Calu3 (cell line): ENCODE measurements at regions of chr2 and their contacts with region 1.

Region 1: DNA sequence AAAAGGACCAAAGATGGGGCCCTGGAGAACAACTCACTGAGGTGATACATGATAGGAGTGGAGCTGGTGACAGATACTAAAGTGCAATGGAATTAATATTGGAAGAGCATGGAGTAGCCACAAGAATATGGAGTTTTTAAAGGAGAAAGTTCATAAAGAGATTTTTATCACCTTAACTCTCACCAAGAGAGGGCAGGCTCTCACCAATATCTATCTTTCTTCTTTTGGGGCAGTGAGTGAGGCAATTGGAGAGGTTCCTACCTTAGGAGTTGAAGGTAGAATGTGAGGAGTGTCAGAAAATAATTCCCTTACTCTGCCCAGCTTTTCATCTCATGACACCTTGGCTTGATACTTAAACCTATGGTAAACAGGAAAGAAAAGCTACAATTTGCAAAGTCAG is 233.7 kb upstream of the CWC22 start:
- DNase-seq: peak; percentile 21
- H3K4me3 Mint-ChIP-seq: no peak overlapping the region
- H3K27ac Mint-ChIP-seq: no peak overlapping the region
- H3K4me1 Mint-ChIP-seq: peaks cover 8% of the 10 kb centered on the region
- H3K27me3 Mint-ChIP-seq: no peaks in the 10 kb centered on the region
- CTCF ChIP-seq: peak; percentile 45

Region 2: DNA sequence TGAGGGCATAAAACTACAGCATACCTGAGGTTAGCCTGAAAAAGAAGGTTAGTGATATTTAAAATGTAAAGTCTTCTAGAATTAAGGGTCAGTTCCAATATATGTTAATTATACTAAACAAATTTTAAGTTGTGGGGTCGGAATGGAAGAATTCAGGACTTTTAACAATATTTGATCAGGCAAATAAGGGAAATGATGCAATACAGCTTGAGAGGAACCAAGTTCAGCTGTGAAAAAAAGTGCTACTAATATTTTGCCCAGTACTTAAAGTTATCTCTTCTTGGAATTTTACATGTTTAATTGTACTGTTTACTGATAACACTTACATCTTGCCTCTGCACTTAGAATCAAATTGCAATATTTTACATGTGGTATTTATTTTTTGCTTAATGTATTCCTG is 111.8 kb after region 1 on chr2:
- CTCF ChIA-PET with region 1: no interaction called
- intact Hi-C with region 1: loop called (anchors 5 kb)
- DNase-seq: no peak
- H3K4me3 Mint-ChIP-seq: no peak overlapping the region
- H3K27ac Mint-ChIP-seq: no peak overlapping the region
- H3K4me1 Mint-ChIP-seq: no peaks in the 10 kb centered on the region
- H3K27me3 Mint-ChIP-seq: no peaks in the 10 kb centered on the region
- CTCF ChIP-seq: no peak

Region 3: GRCh38 chr2:180411661-180412060 is 170.9 kb after region 1 on chr2:
- CTCF ChIA-PET with region 1: interaction called, 4 read pairs
- intact Hi-C with region 1: loop called (anchors 5 kb)
- DNase-seq: peak; percentile 30
- H3K4me3 Mint-ChIP-seq: peak overlapping the region; percentile 40
- H3K27ac Mint-ChIP-seq: peak overlapping the region; percentile 83
- H3K4me1 Mint-ChIP-seq: peaks cover 29% of the 10 kb centered on the region
- H3K27me3 Mint-ChIP-seq: no peaks in the 10 kb centered on the region
- CTCF ChIP-seq: no peak

Region 4: DNA sequence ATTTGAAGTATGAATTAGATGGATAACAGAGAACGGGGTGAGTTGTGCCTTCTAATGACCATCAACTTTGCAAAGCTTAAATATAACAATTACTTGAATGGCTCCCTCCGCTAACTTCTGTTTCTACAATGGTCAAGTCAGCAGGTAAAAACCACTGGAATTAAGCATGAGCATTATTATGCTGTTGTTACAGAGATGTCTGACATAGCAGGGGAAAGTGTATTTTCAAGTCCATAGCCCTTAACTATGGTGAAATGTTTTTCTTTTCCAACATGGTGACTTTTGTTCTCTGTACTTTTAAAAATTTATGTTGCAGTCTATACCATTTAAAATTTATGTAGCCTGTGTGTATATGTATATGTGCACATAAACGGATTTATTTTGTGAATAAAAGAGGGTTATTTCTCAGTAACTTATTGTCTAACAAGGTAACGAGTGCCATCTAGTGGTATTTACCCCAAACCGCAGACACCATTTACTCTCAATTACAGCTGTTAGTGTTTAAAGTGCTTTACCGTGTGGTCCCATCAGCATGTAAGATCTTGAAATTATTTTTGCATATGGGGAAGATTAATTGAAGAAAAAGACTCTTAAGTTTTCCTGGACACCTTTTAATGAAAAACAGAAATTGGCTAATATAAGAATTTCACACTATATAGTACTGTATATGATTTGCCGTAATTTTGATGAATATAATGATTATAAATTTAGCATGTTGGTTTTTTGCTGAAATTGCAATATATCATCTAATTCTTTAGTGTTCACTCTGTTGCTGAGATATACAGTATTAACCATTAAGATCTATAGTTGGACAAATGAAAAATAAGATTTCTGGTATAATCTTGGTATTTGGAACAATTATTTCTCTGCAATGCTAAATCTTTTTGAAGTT is 817.9 kb after region 1 on chr2:
- CTCF ChIA-PET with region 1: interaction called, 3 read pairs
- intact Hi-C with region 1: loop called (anchors 1 kb)
- DNase-seq: peak; percentile 41
- H3K4me3 Mint-ChIP-seq: no peak overlapping the region
- H3K27ac Mint-ChIP-seq: no peak overlapping the region
- H3K4me1 Mint-ChIP-seq: peaks cover 10% of the 10 kb centered on the region
- H3K27me3 Mint-ChIP-seq: no peaks in the 10 kb centered on the region
- CTCF ChIP-seq: peak; percentile 80